Esophagus muscularis mucosa (tissue), 4 donors: ENCODE measurements at regions of chr7 and their contacts with region 1.

Region 1: GRCh38 chr7:36487756-36488336 is 98.2 kb downstream of the ANLN start:
- DNase-seq: no peak
- H3K4me3 ChIP-seq: no peak overlapping the region
- H3K27ac ChIP-seq: no peak overlapping the region
- H3K4me1 ChIP-seq: peaks cover 0 to 8% (median 4%) of the 10 kb centered on the region in 4 donors
- H3K27me3 ChIP-seq: no peaks in the 10 kb centered on the region
- CTCF ChIP-seq: peak; percentile 62 to 70 (median 65)
- EP300 ChIP-seq: no peak
- POLR2A ChIP-seq: no peak

Region 2: DNA sequence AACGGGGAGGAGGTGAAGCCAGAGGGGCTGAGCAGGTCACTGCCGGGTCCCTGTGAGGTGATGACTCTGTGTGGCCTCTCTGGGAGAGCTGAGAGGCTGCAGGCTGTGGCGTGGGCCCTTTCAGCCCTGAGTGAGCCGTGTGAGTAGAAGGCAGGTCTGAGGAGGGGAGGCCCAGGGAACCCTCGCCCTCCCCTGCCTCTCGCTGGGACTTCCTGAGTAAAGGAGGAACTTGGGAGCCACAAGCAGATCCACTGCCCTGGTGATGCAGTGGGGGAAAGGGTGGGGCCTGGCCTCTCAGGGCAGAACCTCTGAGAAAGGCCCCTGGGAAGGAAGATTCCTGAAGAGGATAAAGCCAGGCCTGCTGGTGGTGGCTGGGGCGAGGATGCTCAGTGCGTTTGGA is 312.0 kb before region 1 on chr7:
- intact Hi-C with region 1: no loop called
- DNase-seq: no peak
- H3K4me3 ChIP-seq: no peak overlapping the region
- H3K27ac ChIP-seq: peak overlapping the region; percentile 56 to 64 (median 60)
- H3K4me1 ChIP-seq: peaks cover 6 to 46% (median 45%) of the 10 kb centered on the region in 4 donors
- H3K27me3 ChIP-seq: no peaks in the 10 kb centered on the region
- CTCF ChIP-seq: no peak
- EP300 ChIP-seq: no peak
- POLR2A ChIP-seq: no peak

Region 3: GRCh38 chr7:36670585-36671431 is 183.0 kb after region 1 on chr7:
- intact Hi-C with region 1: loop called (anchors 5 kb)
- DNase-seq: no peak
- H3K4me3 ChIP-seq: no peak overlapping the region
- H3K27ac ChIP-seq: no peak overlapping the region
- H3K4me1 ChIP-seq: no peaks in the 10 kb centered on the region
- H3K27me3 ChIP-seq: no peaks in the 10 kb centered on the region
- CTCF ChIP-seq: peak; percentile 75 to 91 (median 84)
- EP300 ChIP-seq: no peak
- POLR2A ChIP-seq: no peak